K562 (cell line): ENCODE measurements at regions of chr13 and their contacts with region 1.

Region 1: GRCh38 chr13:28408235-28408848 is 86.6 kb downstream of the FLT1 start:
- DNase-seq: peak; percentile 82 to 96 (median 88)
- ATAC-seq: peak; percentile 93
- H3K4me3 ChIP-seq: no peak overlapping the region; the same call in 1 of the 2 replicates
- H3K27ac ChIP-seq: peak overlapping the region; percentile 74
- H3K4me1 ChIP-seq: peaks cover 10 to 41% of the 10 kb centered on the region in 2 experiments; a peak in 4 of 5 replicates
- H3K27me3 ChIP-seq: no peaks in the 10 kb centered on the region
- CTCF ChIP-seq: peak in 2 of 3 experiments; percentile 10 to 26; a peak in 2 of 6 replicates
- EP300 ChIP-seq: peak; percentile 97
- POLR2A ChIP-seq: no peak
- RAD21 ChIP-seq: peak; percentile 5 to 48; a peak in 2 of 4 replicates

Region 2: DNA sequence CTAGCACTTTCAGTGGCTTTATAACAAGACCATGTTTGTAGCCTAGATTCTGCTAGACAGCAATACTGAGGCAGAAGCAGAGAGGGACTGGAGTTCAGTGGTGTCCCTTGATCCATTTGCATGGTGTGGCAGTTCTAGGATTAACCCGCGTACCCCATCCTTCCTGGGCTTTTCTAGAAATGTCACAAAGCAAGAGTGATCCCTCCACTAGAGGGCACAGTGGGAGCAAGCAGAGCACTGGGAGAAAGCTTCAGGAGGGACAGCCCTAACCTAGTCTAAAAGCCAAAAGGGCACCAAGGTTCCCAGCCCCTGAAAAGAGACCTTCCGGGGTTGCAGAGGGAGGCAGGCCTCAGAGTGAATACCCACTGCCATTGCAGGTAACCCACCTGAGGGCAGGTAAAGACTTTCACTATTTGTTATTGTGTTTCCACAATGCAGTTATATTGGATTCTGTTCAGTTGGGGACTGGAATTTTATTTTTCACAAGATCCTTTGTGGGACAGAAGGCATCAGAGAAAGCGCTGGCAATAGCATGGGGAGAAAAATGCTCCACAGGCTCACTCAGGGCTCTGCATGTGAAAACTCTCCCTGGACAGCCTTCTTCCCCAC is 84.1 kb before region 1 on chr13:
- CTCF ChIA-PET with region 1: no interaction called
- POLR2A ChIA-PET with region 1: no interaction called
- in situ Hi-C with region 1: no loop called
- intact Hi-C with region 1: no loop called
- DNase-seq: peak; percentile 43 to 81 (median 62)
- ATAC-seq: peak; percentile 95
- H3K4me3 ChIP-seq: no peak overlapping the region
- H3K27ac ChIP-seq: no peak overlapping the region
- H3K4me1 ChIP-seq: peaks cover 3 to 4% of the 10 kb centered on the region in 2 experiments; a peak in 3 of 5 replicates
- H3K27me3 ChIP-seq: no peaks in the 10 kb centered on the region
- CTCF ChIP-seq: peak; percentile 66 to 77 (median 72)
- EP300 ChIP-seq: no peak
- POLR2A ChIP-seq: no peak
- RAD21 ChIP-seq: peak; percentile 73 to 86

Region 3: GRCh38 chr13:28459911-28460310 is 51.6 kb after region 1 on chr13:
- CTCF ChIA-PET with region 1: no interaction called
- POLR2A ChIA-PET with region 1: no interaction called
- in situ Hi-C with region 1: no loop called
- intact Hi-C with region 1: loop called (anchors 5 kb)
- DNase-seq: no peak
- ATAC-seq: no peak
- H3K4me3 ChIP-seq: no peak overlapping the region
- H3K27ac ChIP-seq: no peak overlapping the region
- H3K4me1 ChIP-seq: no peaks in the 10 kb centered on the region
- H3K27me3 ChIP-seq: no peaks in the 10 kb centered on the region; a peak in 1 of 5 replicates
- CTCF ChIP-seq: no peak
- EP300 ChIP-seq: no peak
- POLR2A ChIP-seq: no peak
- RAD21 ChIP-seq: no peak

Region 4: DNA sequence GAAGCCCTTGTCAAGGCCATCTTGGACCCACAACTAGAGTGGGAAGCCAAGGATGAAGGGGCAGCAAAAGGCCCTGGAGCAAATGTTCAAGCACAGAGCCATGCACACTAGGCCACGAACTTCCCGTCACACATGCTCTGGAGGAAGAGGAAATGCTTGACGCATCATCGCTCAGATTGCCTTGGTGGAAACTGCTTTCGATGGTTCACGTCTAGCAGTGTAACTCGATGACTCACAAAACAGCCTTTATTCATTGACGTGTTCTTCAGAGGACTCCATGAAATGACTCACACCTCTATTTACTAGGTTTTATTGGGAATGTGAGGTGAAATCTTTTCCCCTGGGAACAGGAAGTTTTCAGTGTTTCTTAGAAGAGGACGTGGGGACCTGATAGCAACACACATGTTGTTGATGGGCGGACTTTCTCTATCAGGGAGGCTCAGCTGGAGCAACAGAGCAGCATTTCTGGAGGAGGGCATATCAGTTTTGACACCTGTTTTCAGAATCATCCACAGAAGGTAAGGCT is 166.3 kb after region 1 on chr13:
- CTCF ChIA-PET with region 1: no interaction called
- POLR2A ChIA-PET with region 1: no interaction called
- in situ Hi-C with region 1: no loop called
- intact Hi-C with region 1: loop called (anchors 5 kb)
- DNase-seq: peak; percentile 77 to 91 (median 79)
- ATAC-seq: peak; percentile 79
- H3K4me3 ChIP-seq: no peak overlapping the region; the same call in 1 of the 2 replicates
- H3K27ac ChIP-seq: peak overlapping the region; percentile 81
- H3K4me1 ChIP-seq: peaks cover 0 to 24% of the 10 kb centered on the region in 2 experiments; a peak in 3 of 5 replicates
- H3K27me3 ChIP-seq: no peaks in the 10 kb centered on the region
- CTCF ChIP-seq: no peak
- EP300 ChIP-seq: peak; percentile 95
- POLR2A ChIP-seq: no peak
- RAD21 ChIP-seq: no peak